Activated naive CD4-positive, alpha-beta T cell treated with anti-CD3 and anti-CD28 coated beads for 36 hours (primary cell): ENCODE measurements at regions of chr15 and their contacts with region 1.

Region 1: DNA sequence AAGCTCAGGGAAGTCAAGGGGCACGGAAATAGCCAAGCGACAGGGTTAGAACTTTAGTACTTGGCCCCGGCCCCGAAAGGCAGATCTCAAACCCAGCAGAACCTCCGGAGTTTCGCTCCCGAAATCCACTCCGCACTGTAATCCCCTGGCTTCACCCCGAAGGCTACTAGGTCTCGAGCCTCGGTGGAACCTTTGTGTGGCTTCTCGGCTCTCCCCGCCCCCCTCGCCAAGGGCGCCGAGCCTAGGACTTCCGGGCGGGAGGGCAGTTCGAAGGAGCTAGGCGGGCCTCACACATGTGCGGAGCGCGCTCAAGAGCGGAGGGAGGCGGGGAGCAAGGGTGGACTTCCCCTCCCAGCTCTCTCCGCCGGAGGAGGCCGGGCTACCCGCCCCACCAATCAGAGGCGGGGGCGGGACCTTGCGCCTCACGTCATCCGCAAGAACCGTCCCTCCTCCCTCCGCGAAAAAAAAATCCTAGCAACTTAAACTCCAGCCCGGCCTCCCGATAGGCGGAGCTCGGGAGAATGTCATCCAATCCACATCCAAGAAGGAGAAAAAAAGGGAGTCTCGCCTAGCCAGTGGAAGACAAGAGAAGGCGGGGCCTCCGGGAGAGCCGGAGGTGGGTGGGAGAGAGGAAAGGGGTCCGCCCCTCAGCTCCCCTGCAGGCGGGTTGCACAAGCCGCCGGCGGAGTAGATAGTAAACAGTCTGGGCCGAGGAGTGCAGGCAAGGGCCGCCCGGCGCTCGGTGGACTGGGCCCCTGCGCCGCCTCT is 2.4 kb upstream of the SIN3A start:
- DNase-seq: peak; percentile 98
- H3K4me3 Mint-ChIP-seq: peak overlapping the region; percentile 98
- H3K27ac Mint-ChIP-seq: peak overlapping the region; percentile 98
- H3K4me1 Mint-ChIP-seq: peaks cover 24% of the 10 kb centered on the region
- H3K27me3 Mint-ChIP-seq: no peaks in the 10 kb centered on the region

Region 2: DNA sequence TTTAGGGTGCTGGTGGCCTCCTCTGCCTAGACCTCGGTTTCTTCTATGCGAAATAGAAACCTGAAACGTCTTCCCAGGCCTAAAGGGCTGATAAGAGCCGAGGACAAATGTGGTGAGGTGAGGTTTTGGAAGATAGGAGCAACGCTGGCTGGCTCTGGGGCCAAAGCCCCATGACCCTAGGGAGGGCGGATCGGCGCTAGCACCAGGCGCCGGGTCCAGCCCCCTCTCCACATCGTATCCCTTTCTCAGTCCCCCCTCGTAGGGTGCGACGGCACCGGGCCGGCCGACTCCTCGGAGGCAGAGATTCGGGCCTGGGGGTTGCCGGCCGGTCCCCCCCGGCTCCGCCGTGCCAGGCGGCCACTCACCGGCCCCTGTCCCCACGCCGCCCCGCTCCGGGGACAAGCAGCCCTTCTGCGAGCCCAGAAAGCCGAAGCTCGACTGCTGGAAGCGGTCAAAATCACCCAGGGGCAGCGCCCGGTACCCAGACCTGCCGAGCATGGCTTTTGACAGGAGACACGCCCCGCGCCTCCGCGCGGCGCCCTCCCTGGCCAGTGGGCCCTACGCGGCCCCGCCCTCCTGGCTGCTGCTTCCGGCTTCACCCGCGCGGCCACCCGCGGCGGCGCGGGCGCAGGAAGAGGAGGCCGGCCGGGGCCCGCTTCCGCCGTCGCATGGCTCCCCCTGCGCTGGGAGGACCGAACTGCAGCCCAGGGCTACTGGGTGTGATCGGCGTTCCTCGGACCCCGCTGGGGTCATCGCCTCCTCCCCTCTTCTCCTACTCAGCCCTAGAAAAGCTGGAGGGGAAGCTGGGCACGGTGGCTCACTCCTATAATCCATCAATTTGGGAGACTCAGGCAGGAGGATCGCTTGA is 1461.9 kb before region 1 on chr15 and contains the start of gene STOML1:
- CTCF ChIA-PET with region 1: no interaction called
- intact Hi-C with region 1: loop called (anchors 5 kb)
- DNase-seq: peak; percentile 95
- H3K4me3 Mint-ChIP-seq: peak within 1 kb of the TSS; percentile 95
- H3K27ac Mint-ChIP-seq: peak within 1 kb of the TSS; percentile 83
- H3K4me1 Mint-ChIP-seq: peaks cover 49% of the 10 kb centered on the region
- H3K27me3 Mint-ChIP-seq: no peaks in the 10 kb centered on the region
- total RNA-seq, gene STOML1: 8.7 to 9.5 TPM

Region 3: GRCh38 chr15:74615508-74616365 is 838.1 kb before region 1 on chr15 and contains the start of gene CLK3:
- CTCF ChIA-PET with region 1: no interaction called
- intact Hi-C with region 1: loop called (anchors 2 kb)
- DNase-seq: peak; percentile 97
- H3K4me3 Mint-ChIP-seq: peak within 1 kb of the TSS; percentile 90
- H3K27ac Mint-ChIP-seq: peak within 1 kb of the TSS; percentile 95
- H3K4me1 Mint-ChIP-seq: peaks cover 39% of the 10 kb centered on the region
- H3K27me3 Mint-ChIP-seq: no peaks in the 10 kb centered on the region
- total RNA-seq, gene CLK3: 124 TPM

Region 4: DNA sequence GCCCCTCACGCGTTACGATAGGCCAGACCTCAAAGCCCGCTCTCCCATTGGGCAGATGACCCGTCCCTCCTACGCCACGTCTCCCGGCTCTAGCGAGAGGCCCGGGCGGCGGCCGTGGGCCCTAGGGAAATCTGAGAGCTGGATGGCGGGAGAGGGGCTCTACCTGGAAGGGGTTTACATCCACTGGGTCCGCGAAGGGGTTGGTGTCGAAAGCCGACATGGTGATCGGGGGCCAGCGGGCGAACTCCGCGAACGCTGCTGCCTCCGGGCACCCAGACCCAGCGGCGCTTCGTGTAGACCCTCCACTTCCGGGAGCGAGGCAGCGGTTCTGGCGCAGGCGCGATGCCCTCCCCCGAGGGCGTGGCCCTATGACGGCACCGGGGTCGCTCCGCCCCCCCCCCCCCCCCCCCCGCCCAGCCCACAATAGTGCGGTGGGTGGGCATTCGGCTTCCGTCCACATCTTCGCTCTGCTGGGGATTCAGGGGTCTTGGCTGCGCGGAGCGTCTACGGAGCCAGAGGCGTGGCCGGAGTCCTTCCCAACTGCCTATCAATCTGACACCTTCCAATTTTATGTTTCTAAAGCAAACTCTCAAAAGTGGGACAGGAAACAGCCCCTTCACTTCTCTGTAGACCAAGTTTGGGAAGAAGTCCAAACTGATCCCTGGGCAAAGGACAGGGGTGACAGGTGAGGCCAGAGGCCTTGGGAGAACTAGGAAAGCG is 580.7 kb before region 1 on chr15 and contains the start of gene SCAMP2:
- CTCF ChIA-PET with region 1: no interaction called
- intact Hi-C with region 1: loop called (anchors 5 kb)
- DNase-seq: peak; percentile 92
- H3K4me3 Mint-ChIP-seq: peak within 1 kb of the TSS; percentile 98
- H3K27ac Mint-ChIP-seq: peak within 1 kb of the TSS; percentile 92
- H3K4me1 Mint-ChIP-seq: peaks cover 42% of the 10 kb centered on the region
- H3K27me3 Mint-ChIP-seq: no peaks in the 10 kb centered on the region
- total RNA-seq, gene SCAMP2: 60.6 TPM

Region 5: DNA sequence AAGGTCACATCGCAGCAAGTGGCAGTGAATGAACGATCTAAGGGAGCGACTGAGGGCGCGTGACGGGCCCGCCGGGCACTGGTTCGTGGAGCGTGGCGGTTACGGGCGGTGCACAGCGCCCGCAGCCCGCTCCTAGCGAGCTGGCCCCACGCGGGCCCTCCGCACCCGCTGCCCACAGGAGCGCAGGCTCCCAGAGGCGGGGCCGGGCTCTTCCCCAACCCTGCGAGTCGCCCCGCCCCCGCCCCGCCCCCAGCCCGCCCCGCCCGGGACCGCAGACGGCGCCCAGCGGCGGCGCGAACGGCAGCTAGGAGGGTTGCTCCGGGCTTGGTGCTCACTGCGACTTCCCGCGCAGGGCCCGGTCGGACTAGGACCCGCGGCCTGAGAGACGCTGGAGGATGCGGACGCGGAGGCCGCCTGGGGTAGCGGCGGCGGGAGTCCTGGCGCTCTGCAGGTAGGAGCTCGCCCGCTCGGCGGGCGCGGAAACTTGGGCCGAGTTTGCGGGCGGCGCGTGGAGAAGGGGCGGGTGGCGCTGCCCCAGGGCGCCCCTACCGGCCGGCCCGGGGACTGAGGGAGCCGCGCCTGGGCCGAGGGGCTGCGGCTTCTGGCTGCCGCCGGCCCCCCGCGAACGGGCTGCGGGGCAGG is 252.2 kb before region 1 on chr15 and contains the start of gene C15orf39:
- CTCF ChIA-PET with region 1: no interaction called
- intact Hi-C with region 1: loop called (anchors 2 kb)
- DNase-seq: peak; percentile 68
- H3K4me3 Mint-ChIP-seq: peak within 1 kb of the TSS; percentile 87
- H3K27ac Mint-ChIP-seq: peak within 1 kb of the TSS; percentile 83
- H3K4me1 Mint-ChIP-seq: peaks cover 41% of the 10 kb centered on the region
- H3K27me3 Mint-ChIP-seq: no peaks in the 10 kb centered on the region
- total RNA-seq, gene C15orf39: 7.4 to 8.7 TPM

Region 6: GRCh38 chr15:75625542-75626347 is 171.9 kb after region 1 on chr15 and contains the start of gene SNUPN:
- CTCF ChIA-PET with region 1: interaction called, 5 read pairs
- intact Hi-C with region 1: loop called (anchors 1 kb)
- DNase-seq: peak; percentile 98
- H3K4me3 Mint-ChIP-seq: peak within 1 kb of the TSS; percentile 95
- H3K27ac Mint-ChIP-seq: peak within 1 kb of the TSS; percentile 99
- H3K4me1 Mint-ChIP-seq: peaks cover 41% of the 10 kb centered on the region
- H3K27me3 Mint-ChIP-seq: no peaks in the 10 kb centered on the region
- total RNA-seq, gene SNUPN: 28.5 to 33.1 TPM

Region 7: DNA sequence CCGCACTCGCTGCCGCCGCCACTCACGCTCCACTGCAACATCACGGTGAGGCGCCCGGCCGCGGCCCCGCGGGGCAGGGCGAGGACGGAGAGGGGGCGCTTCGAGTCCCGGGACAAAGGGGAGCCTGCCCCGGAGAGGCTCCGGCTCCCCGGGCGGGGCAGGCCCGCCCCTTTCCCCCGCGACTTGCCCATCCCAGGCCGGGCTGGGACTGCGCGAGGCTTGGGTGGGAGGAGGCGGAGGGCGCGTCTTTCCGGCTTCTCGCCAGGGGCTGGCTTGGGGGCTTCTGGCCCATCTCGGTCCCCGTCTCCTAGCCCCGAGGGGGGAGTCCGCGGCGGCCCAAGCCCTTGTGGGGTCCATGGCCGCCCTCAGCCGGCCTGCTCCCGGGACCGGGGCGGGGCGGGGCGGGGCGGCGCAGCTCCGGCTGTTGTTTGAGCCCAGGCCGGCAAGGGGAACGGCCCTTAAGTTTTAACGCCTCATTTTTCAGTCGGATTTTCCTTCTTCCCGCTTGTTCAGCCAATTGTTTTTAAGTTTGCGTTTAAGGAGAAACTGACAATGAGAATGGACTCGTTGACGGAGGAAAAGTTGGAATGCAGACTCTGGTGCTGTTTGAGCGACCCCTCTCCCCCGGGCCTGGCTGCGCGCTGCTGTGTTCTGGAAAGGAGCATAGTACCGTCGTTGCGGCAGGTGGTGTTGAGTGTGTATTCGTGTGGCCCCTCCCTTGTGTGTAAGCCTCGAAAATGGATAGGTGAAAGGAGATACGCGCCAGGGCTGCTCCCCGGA is 390.1 kb after region 1 on chr15:
- CTCF ChIA-PET with region 1: no interaction called
- intact Hi-C with region 1: loop called (anchors 2 kb)
- DNase-seq: peak; percentile 63
- H3K4me3 Mint-ChIP-seq: peak overlapping the region; percentile 95
- H3K27ac Mint-ChIP-seq: peak overlapping the region; percentile 81
- H3K4me1 Mint-ChIP-seq: peaks cover 37% of the 10 kb centered on the region
- H3K27me3 Mint-ChIP-seq: peaks cover 10% of the 10 kb centered on the region

Region 8: DNA sequence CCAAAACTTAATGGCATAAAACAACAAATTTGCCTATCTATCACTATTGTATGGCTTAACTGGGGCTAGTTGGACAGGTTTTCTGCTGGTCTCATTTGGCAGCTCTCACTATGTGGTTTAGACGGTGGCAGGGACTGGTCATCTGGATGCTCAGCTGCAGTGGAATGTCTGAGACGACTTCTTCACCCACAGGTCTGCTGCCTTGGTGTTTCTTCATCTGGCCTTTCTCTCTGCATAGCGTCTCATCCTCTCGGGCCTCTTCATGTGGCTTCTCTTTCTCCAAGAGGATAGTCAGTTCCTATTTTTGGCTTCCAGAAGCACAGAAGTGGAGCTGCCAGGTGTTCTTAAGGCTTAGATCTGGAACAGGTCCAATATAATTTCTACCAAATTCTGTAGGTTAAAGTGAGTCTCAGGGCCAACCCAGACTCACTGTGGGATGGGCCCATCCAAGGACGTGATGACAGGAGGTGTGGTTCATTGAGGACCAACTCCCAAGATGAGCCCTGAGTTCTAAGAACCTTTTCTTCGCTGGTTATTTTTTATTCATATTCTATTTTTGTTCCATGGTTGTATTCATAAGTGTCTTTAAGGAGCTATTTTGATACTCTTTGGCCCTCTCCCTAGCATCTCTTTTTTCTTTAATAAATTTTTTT is 408.0 kb after region 1 on chr15:
- CTCF ChIA-PET with region 1: no interaction called
- intact Hi-C with region 1: no loop called
- DNase-seq: no peak
- H3K4me3 Mint-ChIP-seq: no peak overlapping the region
- H3K27ac Mint-ChIP-seq: no peak overlapping the region
- H3K4me1 Mint-ChIP-seq: peaks cover 34% of the 10 kb centered on the region
- H3K27me3 Mint-ChIP-seq: no peaks in the 10 kb centered on the region